ENCODE measurements at regions of chr3 and their contacts with region 1.

Region 1: DNA sequence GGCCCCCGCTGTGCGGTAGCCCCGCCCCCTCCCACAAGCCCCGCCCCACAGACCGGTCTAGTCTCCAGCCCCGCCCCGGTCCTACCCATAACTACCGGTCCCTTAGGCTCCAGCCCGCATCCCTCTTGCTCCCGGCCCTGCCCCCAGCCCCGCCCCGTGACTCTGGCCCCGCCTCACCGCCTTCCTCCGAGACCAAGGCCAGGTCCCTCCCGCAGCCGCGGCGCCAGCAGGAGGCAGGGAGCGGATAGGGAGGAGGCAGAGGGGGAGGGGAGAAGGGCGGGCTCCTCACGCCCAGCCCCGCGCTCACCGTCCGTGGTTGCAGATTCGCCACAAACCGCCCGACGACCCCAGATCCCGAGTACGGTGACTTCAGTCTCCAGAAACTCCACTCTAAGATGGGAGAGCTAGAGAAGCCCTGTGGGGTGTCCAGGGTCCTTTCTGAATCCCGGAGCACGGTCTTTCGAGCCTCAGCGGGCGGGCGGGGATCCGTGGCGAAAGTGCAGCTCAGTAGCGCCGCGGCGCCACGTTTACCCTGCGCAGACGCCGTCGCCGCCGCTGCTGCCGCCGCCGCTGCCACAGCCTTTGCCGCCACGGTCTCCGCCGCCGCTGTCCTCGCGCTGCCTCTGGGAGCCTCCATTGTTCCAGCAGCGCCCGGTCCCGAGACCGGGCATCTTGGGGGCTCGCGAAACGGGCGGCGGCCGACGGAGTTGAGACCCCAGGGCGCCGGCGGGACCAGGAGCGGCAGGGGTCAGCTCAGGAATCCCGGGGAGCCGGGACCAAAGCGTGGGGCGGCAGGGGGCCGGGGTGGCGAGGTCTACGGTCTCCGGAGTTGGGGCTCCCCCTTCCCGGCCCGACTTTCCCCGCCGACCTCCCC is at the start of gene BRPF1:
- DNase-seq: peak; percentile 98 to 99
- ATAC-seq: peak; percentile 94 to 97
- H3K4me3 ChIP-seq: peak within 1 kb of the TSS; percentile 92
- H3K27ac ChIP-seq: peak within 1 kb of the TSS; percentile 93 to 97
- H3K4me1 ChIP-seq: peaks cover 16% of the 10 kb centered on the region
- CTCF ChIP-seq: no peak
- EP300 ChIP-seq: no peak
- POLR2A ChIP-seq: peak; percentile 63
- RAD21 ChIP-seq: no peak
- polyA plus RNA-seq, gene BRPF1: 8.6 and 10.1 TPM in 2 replicates

Region 2: DNA sequence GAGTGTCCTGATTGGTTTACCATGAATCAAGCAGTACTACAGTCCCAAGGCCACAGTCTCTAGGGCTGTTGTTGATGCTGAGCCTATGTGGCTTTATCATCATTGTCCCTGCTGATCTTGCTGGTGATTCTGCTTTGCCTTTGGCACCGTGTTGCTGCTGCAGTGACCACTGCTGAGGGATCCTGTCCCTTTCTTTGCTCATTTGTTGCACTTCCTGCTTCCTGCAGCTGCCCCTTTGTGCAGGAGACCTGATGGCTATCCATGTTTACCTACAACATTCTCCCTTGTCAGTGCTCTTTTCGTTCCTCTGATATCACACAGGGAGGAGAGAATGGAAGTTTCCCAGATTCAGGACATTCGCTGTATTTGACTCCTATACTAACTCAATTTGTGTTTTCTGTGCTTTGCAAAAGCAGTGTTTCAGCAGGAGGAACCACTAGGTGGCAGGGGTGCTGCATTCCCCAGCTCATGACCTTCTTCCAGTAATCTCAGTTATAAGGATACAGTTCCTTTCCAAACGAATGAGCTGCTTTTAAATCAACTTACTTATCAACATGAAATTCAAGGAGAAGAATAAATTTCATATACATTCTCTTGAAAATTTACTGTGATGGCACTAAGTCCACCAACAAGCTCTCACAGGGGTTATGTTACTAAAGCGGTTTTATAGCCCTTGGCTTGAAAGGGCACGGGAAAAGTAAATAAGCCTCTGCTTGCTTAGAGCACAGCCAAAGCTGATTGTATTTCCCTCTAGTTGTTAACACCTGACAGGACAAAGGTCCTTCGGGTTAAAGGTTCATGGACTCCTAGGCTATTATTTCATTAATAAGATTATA is 378.3 kb before region 1 on chr3:
- CTCF ChIA-PET with region 1: interaction called, 10 read pairs
- POLR2A ChIA-PET with region 1: no interaction called
- DNase-seq: peak; percentile 71 to 72
- ATAC-seq: peak; percentile 88 to 95
- H3K4me3 ChIP-seq: no peak overlapping the region
- H3K27ac ChIP-seq: no peak overlapping the region
- H3K4me1 ChIP-seq: peaks cover 26% of the 10 kb centered on the region
- CTCF ChIP-seq: peak; percentile 97
- EP300 ChIP-seq: no peak
- POLR2A ChIP-seq: no peak
- RAD21 ChIP-seq: peak; percentile 90 to 92

Region 3: DNA sequence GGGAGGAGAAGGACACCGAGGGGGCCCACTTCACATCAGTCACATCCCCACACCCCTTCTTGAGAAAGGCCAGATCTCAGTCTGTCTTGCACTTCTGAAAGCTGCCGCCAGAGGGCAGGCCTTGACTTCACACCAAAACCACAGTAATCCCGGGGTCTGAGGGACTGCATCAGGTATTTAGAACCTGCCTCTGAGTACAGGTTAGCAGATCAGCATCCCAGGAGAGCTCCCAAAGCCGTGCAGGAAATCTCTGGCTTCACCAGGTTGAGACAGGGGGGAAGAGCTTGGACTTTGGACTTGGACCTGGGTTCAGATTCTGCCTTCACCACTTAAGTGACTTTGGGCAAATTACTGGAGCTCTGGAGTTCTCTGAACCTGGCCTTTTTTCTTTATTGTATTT is 228.2 kb before region 1 on chr3:
- CTCF ChIA-PET with region 1: interaction called, 52 read pairs
- POLR2A ChIA-PET with region 1: no interaction called
- DNase-seq: peak; percentile 80 to 83
- ATAC-seq: peak; percentile 31 to 64; a peak in 4 of 6 replicates
- H3K4me3 ChIP-seq: no peak overlapping the region
- H3K27ac ChIP-seq: no peak overlapping the region
- H3K4me1 ChIP-seq: peaks cover 8% of the 10 kb centered on the region; the same call in 1 of the 3 replicates
- CTCF ChIP-seq: peak; percentile 90
- EP300 ChIP-seq: no peak
- POLR2A ChIP-seq: no peak
- RAD21 ChIP-seq: peak; percentile 87 to 90

Region 4: GRCh38 chr3:9638155-9638554 is 93.3 kb before region 1 on chr3:
- CTCF ChIA-PET with region 1: no interaction called
- POLR2A ChIA-PET with region 1: no interaction called
- DNase-seq: no peak
- ATAC-seq: no peak
- H3K4me3 ChIP-seq: no peak overlapping the region
- H3K27ac ChIP-seq: no peak overlapping the region
- H3K4me1 ChIP-seq: no peaks in the 10 kb centered on the region
- CTCF ChIP-seq: no peak
- EP300 ChIP-seq: no peak
- POLR2A ChIP-seq: no peak
- RAD21 ChIP-seq: no peak

Region 5: GRCh38 chr3:9721015-9721699 is 10.3 kb before region 1 on chr3:
- CTCF ChIA-PET with region 1: interaction called, 99 read pairs
- POLR2A ChIA-PET with region 1: interaction called, 4 read pairs
- DNase-seq: no peak
- ATAC-seq: peak; percentile 44 to 66; a peak in 4 of 6 replicates
- H3K4me3 ChIP-seq: no peak overlapping the region
- H3K27ac ChIP-seq: no peak overlapping the region
- H3K4me1 ChIP-seq: peaks cover 9% of the 10 kb centered on the region
- CTCF ChIP-seq: no peak
- EP300 ChIP-seq: no peak
- POLR2A ChIP-seq: no peak
- RAD21 ChIP-seq: no peak

Region 6: DNA sequence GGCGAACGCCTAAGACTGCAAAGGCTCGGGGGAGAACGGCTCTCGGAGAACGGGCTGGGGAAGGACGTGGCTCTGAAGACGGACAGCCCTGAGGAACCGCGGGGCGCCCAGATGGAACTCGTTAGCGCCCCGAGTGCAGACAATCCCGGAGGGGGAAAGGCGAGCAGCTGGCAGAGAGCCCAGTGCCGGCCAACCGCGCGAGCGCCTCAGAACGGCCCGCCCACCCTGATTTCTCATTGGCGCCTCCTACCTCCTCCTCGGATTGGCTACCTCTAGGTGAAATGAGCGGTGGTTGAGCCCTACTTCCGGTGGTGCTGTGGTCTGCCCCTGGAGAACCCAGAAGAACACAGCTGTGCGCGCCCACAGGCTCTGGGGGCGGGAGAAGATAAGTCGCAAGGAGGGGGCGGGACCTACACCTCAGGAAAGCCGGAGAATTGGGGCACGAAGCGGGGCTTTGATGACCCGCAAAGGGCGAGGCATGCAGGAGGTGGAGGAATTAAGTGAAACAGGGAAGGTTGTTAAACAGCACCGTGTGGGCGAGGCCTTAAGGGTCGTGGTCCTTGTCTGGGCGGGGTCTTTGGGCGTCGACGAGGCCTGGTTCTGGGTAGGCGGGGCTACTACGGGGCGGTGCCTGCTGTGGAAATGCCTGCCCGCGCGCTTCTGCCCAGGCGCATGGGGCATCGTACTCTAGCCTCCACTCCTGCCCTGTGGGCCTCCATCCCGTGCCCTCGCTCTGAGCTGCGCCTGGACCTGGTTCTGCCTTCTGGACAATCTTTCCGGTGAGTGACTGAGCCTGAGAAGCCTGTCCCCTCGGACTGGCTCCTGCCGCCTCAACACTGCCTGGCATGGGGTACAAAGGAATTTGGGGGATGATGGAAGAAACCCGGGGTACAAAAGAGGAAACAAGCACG is 18.5 kb after region 1 on chr3 and contains the start of gene OGG1:
- CTCF ChIA-PET with region 1: interaction called, 18 read pairs
- POLR2A ChIA-PET with region 1: interaction called, 17 read pairs
- DNase-seq: peak; percentile 98 to 99
- ATAC-seq: peak; percentile 95 to 98
- H3K4me3 ChIP-seq: peak within 1 kb of the TSS; percentile 72
- H3K27ac ChIP-seq: peak within 1 kb of the TSS; percentile 95 to 97
- H3K4me1 ChIP-seq: peaks cover 13% of the 10 kb centered on the region; the same call in 2 of the 3 replicates
- CTCF ChIP-seq: no peak
- EP300 ChIP-seq: no peak
- POLR2A ChIP-seq: peak; percentile 50
- RAD21 ChIP-seq: no peak; a peak in 1 of 5 replicates
- polyA plus RNA-seq, gene OGG1: 21.2 and 21.6 TPM in 2 replicates

Region 7: DNA sequence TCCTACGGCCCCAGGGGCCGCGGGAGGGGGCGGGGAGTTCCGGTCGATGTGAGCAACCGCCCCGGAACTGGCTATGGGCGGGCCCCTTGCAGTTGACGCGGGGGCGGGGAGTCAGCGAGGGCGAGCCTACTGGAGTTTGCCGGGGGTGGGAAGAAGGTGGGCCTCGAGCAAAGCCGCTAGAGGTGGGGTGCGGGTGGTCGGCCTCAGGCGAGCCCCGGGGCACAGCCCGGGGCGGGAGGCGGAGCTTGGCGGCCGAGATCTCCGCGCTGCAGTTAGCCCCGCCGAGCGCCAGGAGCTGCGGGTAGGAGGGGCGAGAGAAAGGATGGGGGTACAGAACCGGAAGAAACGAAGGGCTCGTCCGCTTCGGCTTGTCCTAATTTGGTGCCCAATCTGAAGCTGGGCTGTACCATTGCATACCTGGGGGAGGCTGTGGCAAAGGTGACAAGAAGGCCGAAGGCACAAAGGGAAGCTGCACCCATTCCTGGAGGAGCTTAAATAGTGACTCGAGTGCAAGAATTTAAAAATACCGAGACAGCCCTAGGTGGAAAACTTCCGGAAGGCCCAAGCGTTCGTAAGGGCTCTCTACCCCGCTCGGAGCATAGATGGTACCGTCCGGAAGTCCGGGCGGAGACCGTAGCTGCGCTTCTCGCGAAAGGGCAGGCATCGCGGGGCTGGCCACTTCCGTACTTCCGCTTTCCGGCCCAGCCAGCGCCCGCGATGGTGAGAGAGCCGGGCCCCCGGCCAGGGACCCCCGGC is 61.1 kb after region 1 on chr3 and contains the starts of genes ARPC4 and TADA3:
- CTCF ChIA-PET with region 1: interaction called, 3 read pairs
- POLR2A ChIA-PET with region 1: interaction called, 11 read pairs
- DNase-seq: peak; percentile 94 to 96
- ATAC-seq: peak; percentile 94 to 95
- H3K4me3 ChIP-seq: peak within 1 kb of the TSS; percentile 68
- H3K27ac ChIP-seq: peak within 1 kb of the TSS; percentile 95 to 97
- H3K4me1 ChIP-seq: peaks cover 21% of the 10 kb centered on the region
- CTCF ChIP-seq: no peak
- EP300 ChIP-seq: peak in 1 of 2 experiments; percentile 25; a peak in 1 of 5 replicates
- POLR2A ChIP-seq: peak; percentile 44
- RAD21 ChIP-seq: no peak
- polyA plus RNA-seq, gene ARPC4: 126 and 140 TPM in 2 replicates
- polyA plus RNA-seq, gene TADA3: 42.6 and 49.2 TPM in 2 replicates

Measured in A549 (cell line).